H1 (cell line): ENCODE measurements at regions of chr3 and their contacts with region 1.

Region 1: DNA sequence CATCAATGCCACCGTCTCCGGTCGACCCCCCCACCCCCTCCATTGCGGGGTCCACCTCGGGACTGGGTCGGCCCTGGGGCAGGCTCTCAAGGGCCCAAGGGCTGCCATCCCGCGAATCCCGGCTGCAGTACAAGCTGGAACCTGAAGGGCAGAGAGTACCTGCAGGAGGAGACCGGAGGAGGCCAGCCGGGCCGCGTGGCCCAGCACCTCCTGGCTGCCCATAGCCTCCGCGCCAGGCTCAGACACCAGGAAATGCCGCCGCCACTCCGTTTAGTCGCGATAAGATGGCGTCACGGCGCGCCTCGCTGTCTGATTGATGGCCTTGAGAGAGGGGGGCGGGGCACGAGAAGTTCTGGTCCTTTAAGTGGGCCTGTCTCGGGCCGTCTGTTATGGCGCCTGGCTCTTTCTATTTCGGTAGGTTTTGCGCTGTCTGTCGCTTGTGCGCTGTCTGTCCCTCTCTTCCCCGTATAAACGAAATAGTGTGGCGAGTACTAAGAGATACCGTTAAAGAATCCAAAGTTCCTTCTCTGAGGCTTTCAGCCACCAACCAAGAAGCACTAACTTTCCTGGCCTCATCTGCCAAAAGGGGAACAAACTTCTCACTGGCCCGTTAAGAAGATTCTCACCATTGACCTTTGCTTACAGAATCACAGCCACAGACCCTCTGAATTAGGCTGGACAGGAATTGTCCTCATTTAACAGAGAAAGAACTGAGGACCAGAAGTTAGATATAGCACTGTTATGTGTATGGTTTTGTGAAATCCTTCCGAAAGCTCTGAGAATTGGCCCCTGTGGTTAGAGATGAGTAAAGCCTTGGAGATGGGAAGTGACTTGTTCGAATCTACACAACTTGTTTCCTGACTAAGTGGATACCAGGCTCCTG is at the start of gene RFT1:
- DNase-seq: peak; percentile 87 to 98
- H3K4me3 ChIP-seq: peak within 1 kb of the TSS; percentile 88 to 94 (median 91)
- H3K27ac ChIP-seq: peak within 1 kb of the TSS; percentile 62
- H3K4me1 ChIP-seq: peaks cover 0 to 5% (median 3%) of the 10 kb centered on the region in 4 experiments; a peak in 3 of 7 replicates
- H3K27me3 ChIP-seq: no peaks in the 10 kb centered on the region
- CTCF ChIP-seq: peak; percentile 15 to 57 (median 36)
- EP300 ChIP-seq: peak in 1 of 2 experiments; percentile 55; a peak in 1 of 3 replicates
- POLR2A ChIP-seq: peak; percentile 89 to 97
- RAD21 ChIP-seq: peak in 1 of 2 experiments; percentile 13; a peak in 2 of 4 replicates
- total RNA-seq, gene RFT1: 24.4 and 27.7 TPM in 2 replicates

Region 2: GRCh38 chr3:53140847-53141845 is 10.7 kb after region 1 on chr3:
- CTCF ChIA-PET with region 1: interaction called, 21 read pairs
- POLR2A ChIA-PET with region 1: interaction called, 10 read pairs
- DNase-seq: no peak
- H3K4me3 ChIP-seq: no peak overlapping the region
- H3K27ac ChIP-seq: no peak overlapping the region
- H3K4me1 ChIP-seq: no peaks in the 10 kb centered on the region; a peak in 1 of 7 replicates
- H3K27me3 ChIP-seq: no peaks in the 10 kb centered on the region
- CTCF ChIP-seq: no peak
- EP300 ChIP-seq: no peak
- POLR2A ChIP-seq: no peak
- RAD21 ChIP-seq: no peak

Region 3: DNA sequence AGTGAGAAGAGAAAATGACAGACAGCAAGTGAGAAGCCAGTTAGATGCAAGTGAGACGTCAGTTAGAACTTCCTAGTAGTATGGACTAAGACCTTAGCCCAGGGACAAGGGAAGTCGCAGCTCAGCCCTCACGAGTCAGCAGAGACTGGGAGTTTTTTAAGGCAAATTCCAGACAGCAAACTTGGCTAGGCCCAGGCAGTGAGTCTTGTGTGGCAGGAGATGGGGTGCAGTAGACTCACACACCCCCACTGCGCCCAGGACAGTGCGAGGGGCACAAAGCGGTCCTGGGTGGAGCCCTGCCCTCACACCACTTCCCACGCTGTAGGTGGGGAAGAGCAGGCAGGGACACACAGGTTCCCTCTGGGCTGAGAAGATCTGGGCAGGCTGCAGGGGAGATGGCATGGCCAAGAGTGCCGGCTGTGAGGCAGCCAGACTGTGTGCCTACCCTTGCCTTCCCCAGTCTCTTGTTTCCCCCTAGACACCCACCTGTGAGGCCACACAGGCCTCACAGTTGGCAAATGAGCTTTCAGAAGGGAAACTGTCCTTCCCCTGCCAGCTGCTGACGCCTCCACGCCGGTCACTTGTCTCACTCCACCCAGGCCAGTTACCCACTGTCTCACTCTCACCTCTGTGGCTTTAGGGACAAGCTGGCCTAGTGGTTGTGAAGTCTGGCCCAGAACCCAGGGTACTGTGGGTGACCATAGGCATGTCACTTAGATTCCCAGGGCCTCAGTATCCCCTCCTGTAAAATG is 16.9 kb after region 1 on chr3:
- CTCF ChIA-PET with region 1: interaction called, 21 read pairs
- POLR2A ChIA-PET with region 1: interaction called, 10 read pairs
- DNase-seq: no peak
- H3K4me3 ChIP-seq: no peak overlapping the region
- H3K27ac ChIP-seq: no peak overlapping the region
- H3K4me1 ChIP-seq: no peaks in the 10 kb centered on the region; a peak in 1 of 7 replicates
- H3K27me3 ChIP-seq: no peaks in the 10 kb centered on the region
- CTCF ChIP-seq: no peak
- EP300 ChIP-seq: no peak
- POLR2A ChIP-seq: no peak
- RAD21 ChIP-seq: no peak

Region 4: DNA sequence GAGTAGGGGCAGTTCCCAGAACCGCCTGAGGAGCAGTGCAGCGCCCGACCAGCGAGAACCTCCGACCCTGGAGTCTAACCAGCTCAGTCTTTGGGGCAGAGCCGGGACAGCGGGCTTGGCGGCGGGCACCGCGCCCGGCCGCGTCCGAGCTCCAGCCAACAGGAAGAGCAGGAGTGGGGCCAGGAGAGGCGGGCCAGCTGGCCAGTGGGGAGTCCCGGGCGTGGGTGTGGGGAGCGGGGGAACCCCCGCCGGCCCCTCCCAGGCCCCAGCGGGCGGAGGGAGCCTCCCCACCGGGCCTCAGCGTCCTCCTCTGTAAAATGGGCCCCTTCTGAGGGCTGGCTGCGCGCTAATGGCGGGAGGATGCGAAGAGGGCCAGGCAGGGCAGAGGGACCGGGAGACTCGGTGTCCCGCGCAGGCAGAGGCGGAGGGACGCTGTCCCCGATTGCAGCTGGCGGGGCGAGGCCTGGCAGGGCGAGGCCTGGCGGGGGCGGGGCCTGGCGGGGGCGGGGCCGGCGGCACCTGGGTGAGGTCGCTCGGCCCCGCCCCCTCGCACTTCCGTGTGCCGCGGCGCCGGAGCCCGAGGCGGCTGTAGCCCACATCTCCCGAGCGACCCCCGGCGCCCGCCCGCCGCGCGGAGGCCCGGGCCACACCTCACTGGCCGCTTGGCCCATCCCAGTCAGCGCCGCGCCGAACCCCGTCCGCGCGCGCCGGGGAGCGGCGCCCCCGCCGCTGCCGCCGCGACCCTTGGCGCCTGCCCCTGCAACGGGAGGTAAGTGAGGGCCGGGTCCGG is 30.4 kb after region 1 on chr3 and contains the start of gene PRKCD:
- CTCF ChIA-PET with region 1: interaction called, 25 read pairs
- POLR2A ChIA-PET with region 1: interaction called, 3 read pairs
- DNase-seq: peak in 1 of 2 experiments; percentile 84
- H3K4me3 ChIP-seq: peak within 1 kb of the TSS; percentile 85 to 94 (median 92)
- H3K27ac ChIP-seq: no peak within 1 kb of the TSS
- H3K4me1 ChIP-seq: peaks cover 3 to 35% (median 21%) of the 10 kb centered on the region in 4 experiments
- H3K27me3 ChIP-seq: peaks cover 0 to 16% (median 6%) of the 10 kb centered on the region in 4 experiments; a peak in 3 of 7 replicates
- CTCF ChIP-seq: peak in 2 of 3 experiments; percentile 54 to 66; a peak in 3 of 4 replicates
- EP300 ChIP-seq: no peak
- POLR2A ChIP-seq: peak in 1 of 2 experiments; percentile 21; a peak in 1 of 3 replicates
- RAD21 ChIP-seq: peak; percentile 35
- total RNA-seq, gene PRKCD: 22.2 and 22.6 TPM in 2 replicates

Region 5: DNA sequence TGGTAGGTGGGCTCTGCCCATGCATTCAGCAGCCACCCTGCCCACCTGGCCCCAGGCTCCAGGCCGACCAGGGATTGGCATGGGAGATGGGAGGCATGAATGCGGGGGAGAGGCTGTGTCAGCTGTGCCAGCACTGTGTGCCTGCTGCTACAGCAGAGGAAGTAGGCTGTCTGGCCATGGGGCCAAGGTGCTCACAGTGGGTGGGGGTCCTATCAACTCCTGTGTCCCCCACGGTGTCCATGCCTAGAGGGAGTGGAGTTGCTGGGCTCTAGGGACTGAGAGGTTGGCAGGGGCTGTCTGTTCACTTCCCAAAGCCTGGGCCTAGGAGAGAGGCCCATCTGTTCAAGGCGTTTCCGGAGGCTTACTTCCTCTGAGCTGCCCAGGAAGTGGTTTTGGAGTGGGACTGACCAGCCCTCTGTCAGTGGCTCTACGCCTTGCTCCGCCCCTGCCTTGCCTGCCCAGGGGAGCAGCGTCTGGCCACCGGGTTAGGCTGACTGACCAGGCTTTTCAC is 36.4 kb after region 1 on chr3:
- CTCF ChIA-PET with region 1: interaction called, 50 read pairs
- POLR2A ChIA-PET with region 1: interaction called, 4 read pairs
- DNase-seq: no peak
- H3K4me3 ChIP-seq: no peak overlapping the region
- H3K27ac ChIP-seq: no peak overlapping the region
- H3K4me1 ChIP-seq: peaks cover 3 to 46% (median 30%) of the 10 kb centered on the region in 4 experiments
- H3K27me3 ChIP-seq: peaks cover 0 to 3% (median 0%) of the 10 kb centered on the region in 4 experiments; a peak in 3 of 7 replicates
- CTCF ChIP-seq: no peak
- EP300 ChIP-seq: no peak
- POLR2A ChIP-seq: no peak
- RAD21 ChIP-seq: no peak

Region 6: GRCh38 chr3:53180305-53181023 is 50.0 kb after region 1 on chr3:
- CTCF ChIA-PET with region 1: interaction called, 11 read pairs
- POLR2A ChIA-PET with region 1: no interaction called
- DNase-seq: no peak
- H3K4me3 ChIP-seq: no peak overlapping the region
- H3K27ac ChIP-seq: no peak overlapping the region
- H3K4me1 ChIP-seq: no peaks in the 10 kb centered on the region; a peak in 1 of 7 replicates
- H3K27me3 ChIP-seq: no peaks in the 10 kb centered on the region
- CTCF ChIP-seq: no peak
- EP300 ChIP-seq: no peak
- POLR2A ChIP-seq: no peak
- RAD21 ChIP-seq: no peak